Pancreas (tissue), 10 donors: ENCODE measurements at regions of chr1 and their contacts with region 1.

Region 1: GRCh38 chr1:44029906-44030604 is 1.2 kb downstream of the SLC6A9 start:
- DNase-seq: peak; percentile 87 to 96 (median 92)
- ATAC-seq: peak; percentile 87 to 91 (median 88)
- H3K4me3 ChIP-seq: peak overlapping the region; percentile 67 to 94 (median 73)
- H3K27ac ChIP-seq: peak overlapping the region; percentile 63 to 89 (median 72)
- H3K4me1 ChIP-seq: peaks cover 0 to 11% (median 0%) of the 10 kb centered on the region in 3 donors
- H3K27me3 ChIP-seq: no peaks in the 10 kb centered on the region
- CTCF ChIP-seq: no peak

Region 2: GRCh38 chr1:43776043-43776761 is 253.9 kb before region 1 on chr1:
- intact Hi-C with region 1: loop called in 1 of 3 experiments (anchors 10 kb)
- DNase-seq: no peak
- ATAC-seq: no peak
- H3K4me3 ChIP-seq: no peak overlapping the region
- H3K27ac ChIP-seq: no peak overlapping the region
- H3K4me1 ChIP-seq: no peaks in the 10 kb centered on the region
- H3K27me3 ChIP-seq: no peaks in the 10 kb centered on the region
- CTCF ChIP-seq: no peak